HCT116 (cell line): ENCODE measurements at regions of chr10 and their contacts with region 1.

Region 1: GRCh38 chr10:103598654-103599115 is 105.2 kb downstream of the NEURL1 start:
- DNase-seq: peak; percentile 66
- ATAC-seq: peak; percentile 97
- H3K4me3 ChIP-seq: no peak overlapping the region
- H3K27ac ChIP-seq: no peak overlapping the region
- H3K4me1 ChIP-seq: peaks cover 0 to 5% of the 10 kb centered on the region in 2 experiments; a peak in 2 of 4 replicates
- H3K27me3 ChIP-seq: no peaks in the 10 kb centered on the region
- CTCF ChIP-seq: peak; percentile 93 to 98 (median 95)
- POLR2A ChIP-seq: no peak
- RAD21 ChIP-seq: peak; percentile 98

Region 2: DNA sequence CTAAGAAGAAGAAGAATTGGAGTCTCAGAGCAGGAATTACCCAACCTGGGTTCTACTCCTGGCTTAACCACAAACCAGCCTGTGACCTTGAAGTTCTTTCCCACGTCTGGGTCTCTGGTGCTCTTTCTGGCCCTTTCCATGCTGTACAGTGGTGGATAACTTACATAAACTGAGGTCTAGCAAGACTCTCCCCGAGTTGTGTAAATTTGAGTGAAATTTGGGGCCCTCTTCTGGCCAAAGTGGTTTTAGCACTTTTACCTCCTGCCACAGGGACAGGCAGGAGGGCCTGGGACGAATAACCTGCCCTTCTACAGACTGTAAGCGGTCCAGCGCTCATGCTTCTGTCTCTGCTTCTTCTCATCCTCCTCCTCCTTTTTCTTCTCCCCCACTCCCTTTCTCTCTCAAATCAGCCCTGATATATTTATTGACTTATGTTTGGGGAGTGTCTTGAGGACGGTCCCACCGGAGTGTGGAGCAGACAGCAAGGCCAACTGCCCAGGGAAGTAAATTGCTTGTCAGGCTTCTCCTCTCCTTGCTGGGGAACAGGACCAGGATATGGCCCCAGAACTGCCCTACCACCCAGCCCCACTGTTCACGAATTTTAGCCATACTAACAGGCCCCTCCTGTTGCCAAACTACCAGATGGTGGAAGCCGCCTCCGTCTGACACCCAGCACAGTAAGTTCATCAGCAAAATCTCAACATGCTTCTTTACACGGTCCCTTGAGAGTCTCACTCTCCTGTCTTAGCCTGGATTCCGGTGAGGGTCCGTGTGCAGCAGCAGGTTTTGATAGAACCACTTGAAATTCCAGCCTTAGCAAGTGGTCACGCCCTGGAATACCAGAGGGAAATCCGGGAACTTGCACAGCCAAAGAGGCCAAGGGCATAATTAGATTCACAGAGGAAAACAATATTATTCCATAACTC is 260.7 kb after region 1 on chr10:
- CTCF ChIA-PET with region 1: no interaction called
- POLR2A ChIA-PET with region 1: no interaction called
- RAD21 ChIA-PET with region 1: no interaction called
- intact Hi-C with region 1: loop called (anchors 2 kb)
- DNase-seq: peak; percentile 50
- ATAC-seq: peak; percentile 96
- H3K4me3 ChIP-seq: no peak overlapping the region
- H3K27ac ChIP-seq: no peak overlapping the region
- H3K4me1 ChIP-seq: peaks cover 0 to 5% of the 10 kb centered on the region in 2 experiments; a peak in 1 of 4 replicates
- H3K27me3 ChIP-seq: no peaks in the 10 kb centered on the region
- CTCF ChIP-seq: peak; percentile 67 to 93 (median 92)
- POLR2A ChIP-seq: no peak
- RAD21 ChIP-seq: peak; percentile 96